CD8-positive, alpha-beta T cell (primary cell): ENCODE measurements at regions of chr15 and their contacts with region 1.

Region 1: DNA sequence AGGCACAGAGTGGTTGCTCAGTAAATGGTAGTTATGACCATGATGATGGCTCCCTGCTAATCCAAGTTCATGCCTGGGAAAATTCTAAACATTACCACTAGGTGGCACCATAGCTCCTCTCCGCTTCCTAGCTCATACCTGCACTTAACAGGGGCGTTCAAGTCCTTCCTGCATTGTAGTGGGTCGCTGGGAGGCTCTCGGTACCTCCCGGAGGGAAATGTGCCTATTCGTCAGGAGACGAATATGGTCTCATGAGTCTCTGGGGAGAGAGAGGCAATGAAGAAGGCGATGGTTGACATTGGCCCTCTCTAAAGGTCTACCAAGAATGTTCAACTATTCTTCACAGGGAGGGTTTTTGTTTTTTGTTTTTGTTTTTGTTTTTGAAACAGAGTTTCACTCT is 10.9 kb downstream of the MESP1 start:
- DNase-seq: peak in 8 of 9 experiments; percentile 27 to 80 (median 58)
- ATAC-seq: peak; percentile 91
- H3K4me3 ChIP-seq: no peak overlapping the region
- H3K4me3 Mint-ChIP-seq: no peak overlapping the region
- H3K27ac ChIP-seq: no peak overlapping the region
- H3K27ac Mint-ChIP-seq: no peak overlapping the region
- H3K4me1 ChIP-seq: no peaks in the 10 kb centered on the region
- H3K4me1 Mint-ChIP-seq: peaks cover 2% of the 10 kb centered on the region
- H3K27me3 ChIP-seq: no peaks in the 10 kb centered on the region
- H3K27me3 Mint-ChIP-seq: peaks cover 6% of the 10 kb centered on the region
- CTCF ChIP-seq: peak; percentile 83

Region 2: GRCh38 chr15:89750560-89751542 is 10.7 kb after region 1 on chr15 and contains the start of gene MESP1:
- CTCF ChIA-PET with region 1: interaction called, 15 read pairs
- POLR2A ChIA-PET with region 1: interaction called, 3 read pairs
- intact Hi-C with region 1: no loop called
- DNase-seq: peak; percentile 67 to 93 (median 84)
- ATAC-seq: peak; percentile 90
- H3K4me3 ChIP-seq: peak within 1 kb of the TSS; percentile 40 to 76
- H3K4me3 Mint-ChIP-seq: peak within 1 kb of the TSS; percentile 81
- H3K27ac ChIP-seq: no peak within 1 kb of the TSS
- H3K27ac Mint-ChIP-seq: no peak within 1 kb of the TSS
- H3K4me1 ChIP-seq: peaks cover 7% of the 10 kb centered on the region
- H3K4me1 Mint-ChIP-seq: peaks cover 3% of the 10 kb centered on the region
- H3K27me3 ChIP-seq: peaks cover 0 to 8% of the 10 kb centered on the region in 2 experiments
- H3K27me3 Mint-ChIP-seq: peaks cover 25% of the 10 kb centered on the region
- CTCF ChIP-seq: peak; percentile 57
- total RNA-seq, gene MESP1: 0.19 to 0.24 TPM

Region 3: DNA sequence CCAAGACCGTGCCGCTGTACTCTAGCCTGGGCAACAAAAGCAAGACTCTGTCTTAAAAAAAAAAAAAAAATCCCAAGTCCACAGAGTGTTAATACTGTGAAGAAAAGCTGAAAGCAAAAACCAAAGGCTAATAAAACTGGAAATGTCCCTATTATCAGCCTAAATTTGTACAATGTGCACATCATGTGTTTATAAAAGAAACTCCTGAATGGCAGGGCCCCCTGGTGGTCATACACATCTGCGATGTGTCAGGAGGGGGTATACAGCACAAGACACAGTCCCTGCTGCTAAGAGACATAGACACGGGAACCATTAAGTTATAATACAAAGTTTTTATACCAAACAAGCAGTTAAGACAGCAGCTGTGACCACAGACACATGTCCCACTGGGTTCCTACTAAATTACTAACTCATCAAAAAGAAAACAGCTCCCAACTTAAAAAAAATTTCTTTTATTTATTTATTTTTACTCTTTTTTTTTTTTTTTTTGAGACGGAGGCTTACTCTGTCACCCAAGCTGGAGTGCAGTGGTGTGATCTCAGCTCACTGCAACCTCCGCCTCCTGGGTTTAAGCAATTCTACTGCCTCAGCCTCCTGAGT is 331.2 kb after region 1 on chr15:
- CTCF ChIA-PET with region 1: interaction called, 7 read pairs
- POLR2A ChIA-PET with region 1: no interaction called
- intact Hi-C with region 1: loop called in 1 of 2 experiments (anchors 1 kb)
- DNase-seq: peak; percentile 54 to 87 (median 83)
- ATAC-seq: peak; percentile 99
- H3K4me3 ChIP-seq: no peak overlapping the region
- H3K4me3 Mint-ChIP-seq: no peak overlapping the region
- H3K27ac ChIP-seq: no peak overlapping the region
- H3K27ac Mint-ChIP-seq: no peak overlapping the region
- H3K4me1 ChIP-seq: no peaks in the 10 kb centered on the region
- H3K4me1 Mint-ChIP-seq: peaks cover 7% of the 10 kb centered on the region
- H3K27me3 ChIP-seq: no peaks in the 10 kb centered on the region
- H3K27me3 Mint-ChIP-seq: no peaks in the 10 kb centered on the region
- CTCF ChIP-seq: peak; percentile 81

Region 4: GRCh38 chr15:90219421-90220166 is 479.5 kb after region 1 on chr15:
- CTCF ChIA-PET with region 1: no interaction called
- POLR2A ChIA-PET with region 1: no interaction called
- intact Hi-C with region 1: loop called in 1 of 2 experiments (anchors 10 kb)
- DNase-seq: peak; percentile 38 to 75 (median 65)
- ATAC-seq: peak; percentile 98
- H3K4me3 ChIP-seq: no peak overlapping the region
- H3K4me3 Mint-ChIP-seq: no peak overlapping the region
- H3K27ac ChIP-seq: no peak overlapping the region
- H3K27ac Mint-ChIP-seq: no peak overlapping the region
- H3K4me1 ChIP-seq: peaks cover 7% of the 10 kb centered on the region
- H3K4me1 Mint-ChIP-seq: peaks cover 9% of the 10 kb centered on the region
- H3K27me3 ChIP-seq: no peaks in the 10 kb centered on the region
- H3K27me3 Mint-ChIP-seq: no peaks in the 10 kb centered on the region
- CTCF ChIP-seq: peak; percentile 68